Prostate gland (tissue), 2 donors: ENCODE measurements at regions of chr1 and their contacts with region 1.

Region 1: GRCh38 chr1:201447911-201448871 is 20.8 kb downstream of the PHLDA3 start:
- DNase-seq: peak; percentile 78
- H3K4me3 ChIP-seq: no peak overlapping the region
- H3K27ac ChIP-seq: no peak overlapping the region
- H3K4me1 ChIP-seq: peaks cover 4% of the 10 kb centered on the region
- H3K27me3 ChIP-seq: no peaks in the 10 kb centered on the region
- CTCF ChIP-seq: peak; percentile 74 to 94 (median 90)
- POLR2A ChIP-seq: no peak

Region 2: GRCh38 chr1:201385299-201385891 is 62.8 kb before region 1 on chr1:
- intact Hi-C with region 1: no loop called
- DNase-seq: peak; percentile 73
- H3K4me3 ChIP-seq: no peak overlapping the region
- H3K27ac ChIP-seq: no peak overlapping the region
- H3K4me1 ChIP-seq: no peaks in the 10 kb centered on the region
- H3K27me3 ChIP-seq: no peaks in the 10 kb centered on the region
- CTCF ChIP-seq: peak; percentile 46 to 91 (median 78)
- POLR2A ChIP-seq: no peak

Region 3: GRCh38 chr1:201481761-201482493 is 33.7 kb after region 1 on chr1:
- intact Hi-C with region 1: loop called (anchors 2 kb)
- DNase-seq: peak; percentile 84
- H3K4me3 ChIP-seq: peak overlapping the region in 1 of 2 donors; percentile 4
- H3K27ac ChIP-seq: peak overlapping the region; percentile 70 to 75
- H3K4me1 ChIP-seq: no peaks in the 10 kb centered on the region
- H3K27me3 ChIP-seq: no peaks in the 10 kb centered on the region
- CTCF ChIP-seq: peak; percentile 90 to 99 (median 98)
- POLR2A ChIP-seq: no peak

Region 4: GRCh38 chr1:201511941-201512539 is 63.8 kb after region 1 on chr1:
- intact Hi-C with region 1: loop called (anchors 2 kb)
- DNase-seq: peak; percentile 79
- H3K4me3 ChIP-seq: no peak overlapping the region
- H3K27ac ChIP-seq: peak overlapping the region; percentile 79 to 83
- H3K4me1 ChIP-seq: peaks cover 25% of the 10 kb centered on the region
- H3K27me3 ChIP-seq: no peaks in the 10 kb centered on the region
- CTCF ChIP-seq: peak in 1 of 4 experiments; percentile 8
- POLR2A ChIP-seq: peak; percentile 17